A549 (cell line): ENCODE measurements at regions of chr9 and their contacts with region 1.

Region 1: GRCh38 chr9:135864447-135865049 is 42.8 kb downstream of the CAMSAP1 start:
- DNase-seq: peak; percentile 44 to 66
- ATAC-seq: peak; percentile 71 to 87; a peak in 5 of 6 replicates
- H3K4me3 ChIP-seq: no peak overlapping the region
- H3K27ac ChIP-seq: no peak overlapping the region
- H3K4me1 ChIP-seq: no peaks in the 10 kb centered on the region
- CTCF ChIP-seq: peak; percentile 78
- EP300 ChIP-seq: no peak
- POLR2A ChIP-seq: no peak
- RAD21 ChIP-seq: peak; percentile 48 to 63; a peak in 4 of 5 replicates

Region 2: DNA sequence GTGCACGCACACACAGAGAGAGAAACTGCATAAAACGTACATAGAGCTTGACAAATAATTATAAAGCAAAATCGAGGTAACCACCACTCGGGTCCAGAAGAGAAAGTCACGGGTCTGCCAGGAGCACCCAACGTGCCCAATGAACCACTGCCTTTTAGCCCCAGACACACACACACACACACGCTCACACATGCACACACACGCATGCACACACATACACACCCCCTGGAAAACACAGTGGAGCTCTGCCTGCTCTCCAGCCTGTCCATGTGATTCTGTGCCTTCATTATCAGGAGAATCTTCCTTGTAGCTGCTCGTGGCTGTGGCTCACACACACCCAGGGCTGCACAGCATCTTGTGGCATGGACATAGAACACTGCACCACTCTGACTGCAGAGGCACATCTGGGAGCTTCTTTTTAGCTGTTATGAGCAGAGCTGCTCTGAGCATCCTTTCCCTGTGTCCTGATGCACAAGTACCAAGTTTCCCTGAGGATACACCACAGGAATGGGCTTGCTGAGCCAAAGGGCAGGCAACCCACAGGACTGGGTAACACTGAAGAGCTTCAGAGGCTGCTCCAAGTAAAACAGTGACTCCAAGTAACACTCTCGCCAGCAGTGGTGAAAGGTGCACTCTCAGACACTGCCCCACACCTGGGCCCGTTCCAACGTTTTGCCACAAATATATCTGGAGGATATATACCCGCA is 16.1 kb before region 1 on chr9:
- CTCF ChIA-PET with region 1: interaction called, 28 read pairs
- POLR2A ChIA-PET with region 1: no interaction called
- DNase-seq: no peak
- ATAC-seq: peak; percentile 56 to 59; a peak in 5 of 6 replicates
- H3K4me3 ChIP-seq: no peak overlapping the region
- H3K27ac ChIP-seq: no peak overlapping the region
- H3K4me1 ChIP-seq: no peaks in the 10 kb centered on the region
- CTCF ChIP-seq: no peak
- EP300 ChIP-seq: no peak
- POLR2A ChIP-seq: no peak
- RAD21 ChIP-seq: no peak

Region 3: GRCh38 chr9:135877776-135878527 is 13.4 kb after region 1 on chr9:
- CTCF ChIA-PET with region 1: interaction called, 20 read pairs
- POLR2A ChIA-PET with region 1: no interaction called
- DNase-seq: no peak
- ATAC-seq: no peak
- H3K4me3 ChIP-seq: no peak overlapping the region
- H3K27ac ChIP-seq: no peak overlapping the region
- H3K4me1 ChIP-seq: no peaks in the 10 kb centered on the region
- CTCF ChIP-seq: no peak
- EP300 ChIP-seq: no peak
- POLR2A ChIP-seq: no peak
- RAD21 ChIP-seq: no peak